ENCODE measurements at regions of chr1 and their contacts with region 1.

Region 1: GRCh38 chr1:44036409-44037139 is 5.3 kb upstream of the SLC6A9 start:
- DNase-seq: peak; percentile 71
- H3K4me3 Mint-ChIP-seq: no peak overlapping the region
- H3K27ac Mint-ChIP-seq: no peak overlapping the region
- H3K4me1 Mint-ChIP-seq: peaks cover 15% of the 10 kb centered on the region
- H3K27me3 Mint-ChIP-seq: peaks cover 7% of the 10 kb centered on the region

Region 2: DNA sequence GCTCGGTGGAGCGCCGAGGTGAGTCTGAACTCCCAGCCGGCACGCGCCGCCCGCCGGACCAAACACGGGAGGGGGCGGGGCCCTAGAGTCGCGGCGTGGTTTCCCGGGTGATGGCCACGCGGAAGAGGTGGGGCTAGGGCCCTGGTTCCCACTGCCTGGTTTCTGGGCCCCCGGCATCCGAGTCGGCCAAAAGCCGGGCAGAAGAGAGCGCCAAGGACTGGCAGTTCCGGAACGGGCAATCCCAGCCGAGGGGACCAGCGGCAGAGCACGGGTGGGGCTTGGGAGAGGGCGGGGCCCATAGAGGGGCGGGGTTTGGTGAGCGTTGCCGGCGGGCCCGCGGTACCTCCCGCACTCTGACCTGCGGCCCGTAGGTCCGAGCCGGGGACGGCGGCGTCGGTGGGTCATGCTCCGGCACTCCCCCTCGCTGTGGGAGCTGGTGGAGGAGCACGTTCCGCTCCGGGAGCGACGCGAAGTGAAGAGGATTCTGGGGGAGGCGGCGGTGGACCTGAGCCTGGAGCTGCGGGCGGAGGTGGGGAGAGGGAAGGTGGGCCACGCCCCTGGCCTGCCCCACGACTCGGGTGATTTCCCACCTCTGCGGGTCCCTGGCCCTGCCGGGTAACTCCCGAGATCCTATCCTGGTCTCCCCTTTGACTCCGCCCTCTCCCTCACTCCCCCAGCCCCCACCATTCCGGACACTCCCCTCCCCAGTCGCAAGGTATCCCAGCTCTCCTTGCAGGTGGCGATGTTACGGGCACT is 44.9 kb before region 1 on chr1 and contains the start of gene CCDC24:
- CTCF ChIA-PET with region 1: interaction called, 12 read pairs
- POLR2A ChIA-PET with region 1: no interaction called
- DNase-seq: peak; percentile 78
- H3K4me3 Mint-ChIP-seq: peak within 1 kb of the TSS; percentile 90
- H3K27ac Mint-ChIP-seq: peak within 1 kb of the TSS; percentile 64
- H3K4me1 Mint-ChIP-seq: peaks cover 24% of the 10 kb centered on the region
- H3K27me3 Mint-ChIP-seq: no peaks in the 10 kb centered on the region
- total RNA-seq, gene CCDC24: 1.8 to 2.2 TPM

Region 3: DNA sequence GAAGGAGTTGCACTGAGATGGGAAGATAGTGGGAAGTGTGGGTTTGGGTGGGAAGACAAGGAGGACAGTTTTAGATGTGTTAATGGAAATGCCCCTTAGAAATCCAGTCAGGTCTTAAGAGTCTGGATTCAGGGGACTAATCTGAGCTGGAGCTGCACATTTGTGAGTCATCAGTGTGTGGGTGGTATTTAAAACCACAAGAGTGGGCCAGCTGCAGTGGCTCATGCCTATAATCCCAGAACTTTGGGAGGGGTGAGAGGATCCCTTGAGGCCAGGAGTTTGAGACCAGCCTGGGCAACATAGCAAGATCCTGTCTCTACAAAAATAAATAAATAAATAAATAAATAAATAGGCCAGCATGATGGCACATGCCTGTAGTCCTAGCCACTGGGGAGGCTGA is 35.6 kb after region 1 on chr1:
- CTCF ChIA-PET with region 1: no interaction called
- POLR2A ChIA-PET with region 1: no interaction called
- DNase-seq: no peak
- H3K4me3 Mint-ChIP-seq: no peak overlapping the region
- H3K27ac Mint-ChIP-seq: no peak overlapping the region
- H3K4me1 Mint-ChIP-seq: no peaks in the 10 kb centered on the region
- H3K27me3 Mint-ChIP-seq: peaks cover 18% of the 10 kb centered on the region

Region 4: DNA sequence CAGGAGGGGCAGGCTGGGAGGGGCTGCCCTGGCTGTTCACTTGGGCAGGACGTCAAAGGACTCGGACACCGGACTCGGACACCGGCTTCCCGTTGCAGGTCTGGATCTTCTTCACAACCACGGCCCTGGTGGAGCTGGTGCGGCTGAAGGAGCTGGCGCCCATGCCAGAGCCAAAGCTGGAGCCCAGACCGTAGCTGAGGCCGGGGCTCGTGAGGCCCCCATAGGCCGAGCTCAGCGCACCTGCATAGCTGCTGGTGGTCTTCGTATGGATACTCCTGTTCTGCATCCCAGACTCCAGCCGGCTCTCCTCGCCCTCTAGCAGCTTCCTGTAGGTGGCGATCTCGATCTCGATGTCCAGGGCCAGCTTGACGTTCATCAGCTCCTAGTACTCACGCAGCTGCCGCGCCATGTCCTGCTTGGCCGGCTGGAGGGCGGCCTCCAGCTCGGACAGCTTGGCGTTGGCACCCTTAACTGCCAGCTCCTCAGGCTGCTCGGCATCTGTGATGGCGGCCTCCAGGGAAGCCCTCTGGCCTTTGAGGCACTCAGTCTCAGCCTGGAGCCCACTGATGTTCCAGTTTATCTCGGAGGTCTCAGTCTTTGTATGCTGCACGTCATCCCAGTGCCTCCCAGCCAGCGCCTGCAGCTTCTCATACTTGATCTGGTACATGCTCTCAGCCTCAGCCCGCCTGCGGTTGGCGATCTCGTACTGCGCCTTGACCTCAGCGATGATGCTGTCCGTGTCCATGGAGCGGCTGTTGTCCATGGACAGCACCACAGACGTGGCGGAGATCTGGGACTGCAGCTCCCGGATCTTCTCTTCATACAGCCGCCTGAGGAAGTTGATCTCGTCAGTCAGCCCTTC is 66.9 kb after region 1 on chr1:
- CTCF ChIA-PET with region 1: no interaction called
- POLR2A ChIA-PET with region 1: no interaction called
- DNase-seq: no peak
- H3K4me3 Mint-ChIP-seq: no peak overlapping the region
- H3K27ac Mint-ChIP-seq: no peak overlapping the region
- H3K4me1 Mint-ChIP-seq: no peaks in the 10 kb centered on the region
- H3K27me3 Mint-ChIP-seq: peaks cover 20% of the 10 kb centered on the region

Region 5: DNA sequence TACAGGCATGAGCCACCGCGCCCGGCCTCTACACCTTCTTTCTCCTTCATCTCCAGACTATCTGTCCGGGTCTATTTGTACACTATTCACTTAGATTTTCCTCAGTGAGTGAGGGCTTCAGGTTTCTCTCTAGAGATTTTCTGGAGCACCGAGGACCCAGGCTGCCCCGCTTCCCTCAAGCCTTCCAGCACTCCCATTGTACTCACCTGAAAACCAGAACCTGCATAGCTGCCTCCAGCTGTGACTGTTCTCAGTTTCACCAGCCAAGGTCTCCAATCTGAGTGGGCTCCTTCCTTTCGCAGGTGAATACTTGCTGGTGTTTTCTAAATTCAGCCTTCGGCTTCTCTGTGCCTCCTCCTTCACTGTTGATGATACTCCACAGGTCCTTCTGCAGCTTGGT is 163.8 kb after region 1 on chr1:
- CTCF ChIA-PET with region 1: no interaction called
- POLR2A ChIA-PET with region 1: no interaction called
- DNase-seq: no peak
- H3K4me3 Mint-ChIP-seq: no peak overlapping the region
- H3K27ac Mint-ChIP-seq: no peak overlapping the region
- H3K4me1 Mint-ChIP-seq: no peaks in the 10 kb centered on the region
- H3K27me3 Mint-ChIP-seq: no peaks in the 10 kb centered on the region